Mammary epithelial cell (primary cell): ENCODE measurements at regions of chr12 and their contacts with region 1.

Region 1: GRCh38 chr12:63068857-63069442 is 82.1 kb downstream of the AVPR1A start:
- DNase-seq: peak; percentile 37
- H3K4me3 ChIP-seq: no peak overlapping the region
- H3K27ac ChIP-seq: no peak overlapping the region
- H3K4me1 ChIP-seq: no peaks in the 10 kb centered on the region
- H3K27me3 ChIP-seq: no peaks in the 10 kb centered on the region
- CTCF ChIP-seq: peak; percentile 56 to 62

Region 2: DNA sequence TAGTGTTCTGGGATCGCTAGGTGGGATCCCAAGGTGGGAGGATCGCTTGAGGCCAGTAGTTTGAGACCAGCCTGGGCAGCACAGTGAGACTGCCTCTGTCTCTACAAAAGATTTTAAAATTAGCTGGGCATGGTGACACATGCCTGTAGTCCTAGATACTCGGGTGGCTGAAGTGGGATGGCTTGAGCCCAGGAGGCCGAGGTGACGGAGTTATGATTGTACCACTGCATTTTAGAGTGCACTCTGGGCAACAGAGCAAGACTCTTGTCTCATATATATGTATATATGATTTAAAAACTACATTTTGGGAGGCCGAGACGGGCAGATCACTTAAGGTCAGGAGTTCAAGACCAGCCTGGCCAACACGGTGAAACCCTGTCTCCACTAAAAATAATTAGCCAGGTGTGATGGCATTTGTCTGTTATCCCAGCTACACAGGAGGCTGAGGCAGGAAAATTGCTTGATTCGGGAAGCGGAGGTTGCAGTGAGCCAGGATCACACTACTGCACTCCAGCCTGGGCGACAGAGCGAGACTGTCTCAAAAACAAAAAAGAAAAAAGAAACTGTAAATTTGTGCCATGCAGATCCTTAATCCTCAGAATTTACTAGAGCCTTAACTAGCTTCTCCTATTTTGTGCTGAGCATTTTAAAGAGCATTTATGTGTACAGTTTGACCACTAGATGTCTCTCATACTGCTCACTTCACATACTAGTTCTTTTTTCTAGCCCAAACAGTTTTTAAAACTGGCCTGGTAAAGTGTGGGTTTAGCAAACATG is 487.5 kb before region 1 on chr12:
- CTCF ChIA-PET with region 1: no interaction called
- dilution Hi-C with region 1: no loop called
- in situ Hi-C with region 1: loop called in 1 of 2 experiments (anchors 25 kb)
- intact Hi-C with region 1: loop called (anchors 5 kb)
- DNase-seq: peak; percentile 25
- H3K4me3 ChIP-seq: no peak overlapping the region
- H3K27ac ChIP-seq: no peak overlapping the region
- H3K4me1 ChIP-seq: no peaks in the 10 kb centered on the region
- H3K27me3 ChIP-seq: no peaks in the 10 kb centered on the region
- CTCF ChIP-seq: peak; percentile 46 to 65

Region 3: GRCh38 chr12:62799126-62799736 is 269.7 kb before region 1 on chr12:
- CTCF ChIA-PET with region 1: interaction called, 7 read pairs
- dilution Hi-C with region 1: no loop called
- in situ Hi-C with region 1: no loop called
- intact Hi-C with region 1: loop called (anchors 1 kb)
- DNase-seq: peak; percentile 36
- H3K4me3 ChIP-seq: no peak overlapping the region
- H3K27ac ChIP-seq: no peak overlapping the region
- H3K4me1 ChIP-seq: peaks cover 7% of the 10 kb centered on the region
- H3K27me3 ChIP-seq: no peaks in the 10 kb centered on the region
- CTCF ChIP-seq: peak; percentile 95 to 97

Region 4: DNA sequence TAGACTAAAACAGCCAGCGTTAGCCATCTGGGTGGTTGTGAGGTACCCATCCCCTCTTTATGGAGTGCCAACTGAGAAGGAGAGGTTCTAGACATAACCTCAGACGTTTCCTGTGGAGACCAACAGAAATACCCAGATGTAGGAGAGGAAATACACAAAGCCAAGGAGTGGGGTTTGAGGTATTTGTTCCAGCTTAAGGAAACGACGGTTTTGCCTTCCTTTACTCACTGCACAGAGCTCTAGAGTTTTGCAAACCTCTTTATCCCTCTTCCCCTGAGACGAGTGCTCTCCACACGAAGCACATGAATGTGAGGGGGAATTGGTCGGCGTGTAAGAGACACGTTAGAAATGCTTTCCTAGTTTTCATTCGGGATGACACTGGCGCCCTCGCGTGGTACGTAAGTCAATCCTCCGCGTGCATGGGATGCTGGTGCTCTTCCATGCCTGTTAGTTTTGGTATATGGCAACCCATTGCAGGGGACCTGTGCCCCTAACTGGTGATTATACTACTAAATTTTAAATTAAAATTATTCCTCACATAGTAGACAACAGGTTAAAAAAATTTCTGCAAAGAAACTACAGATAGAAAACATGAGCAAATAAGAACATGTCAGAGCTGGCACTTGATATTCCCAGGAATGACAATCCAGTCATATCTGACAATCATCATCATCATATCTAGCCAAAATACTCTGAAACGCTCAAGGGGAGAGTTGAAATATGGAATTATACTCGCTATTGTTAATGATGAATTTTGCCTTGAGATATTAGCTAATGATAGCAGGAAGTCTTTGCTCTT is 255.7 kb before region 1 on chr12:
- CTCF ChIA-PET with region 1: interaction called, 10 read pairs
- dilution Hi-C with region 1: no loop called
- in situ Hi-C with region 1: loop called (anchors 10 kb)
- intact Hi-C with region 1: loop called (anchors 1 kb)
- DNase-seq: peak; percentile 40
- H3K4me3 ChIP-seq: no peak overlapping the region
- H3K27ac ChIP-seq: no peak overlapping the region
- H3K4me1 ChIP-seq: peaks cover 8% of the 10 kb centered on the region
- H3K27me3 ChIP-seq: no peaks in the 10 kb centered on the region
- CTCF ChIP-seq: peak; percentile 85 to 90

Region 5: DNA sequence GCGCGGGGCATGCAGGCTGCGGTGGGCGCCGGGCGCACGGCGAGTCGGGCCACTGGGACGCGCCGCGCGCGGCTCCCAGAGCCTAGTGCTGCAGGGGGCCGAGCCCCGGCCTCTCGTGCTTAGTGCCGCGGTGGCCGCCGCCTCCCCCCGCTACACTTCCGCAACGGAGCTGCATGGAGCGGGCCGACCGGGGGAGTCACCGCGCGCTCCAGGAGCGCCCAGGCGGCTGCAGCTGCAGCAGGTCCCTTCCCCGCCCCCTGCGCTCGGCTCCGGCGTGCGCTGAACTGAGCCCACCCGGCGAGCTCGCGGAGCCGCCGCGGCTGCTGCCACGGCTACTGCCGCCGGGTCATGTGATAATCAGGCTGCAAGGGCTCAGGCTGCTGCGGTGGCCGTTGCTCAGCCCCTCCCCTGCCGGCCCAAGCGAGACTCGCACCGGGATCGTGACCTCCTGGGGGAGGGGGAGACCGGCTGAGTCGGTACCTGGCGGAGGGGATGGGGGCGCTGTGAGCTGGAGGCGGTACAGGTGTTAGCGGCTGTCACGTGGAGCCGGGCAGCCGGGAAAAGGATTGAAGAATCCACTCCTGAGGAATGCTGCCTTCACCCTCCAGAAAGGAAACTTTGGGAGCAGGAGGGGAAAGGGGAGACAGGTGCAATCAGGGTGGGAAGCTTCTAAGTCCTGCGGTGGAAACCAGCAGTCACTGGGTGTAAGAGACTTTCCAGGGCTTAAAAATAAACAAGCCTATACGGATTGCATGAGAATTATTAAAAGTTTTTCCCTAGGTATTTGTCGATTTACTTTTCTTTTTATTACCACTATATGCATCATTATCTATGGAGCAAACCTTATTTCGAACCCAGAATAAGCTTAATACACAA is 133.9 kb before region 1 on chr12 and contains the start of gene PPM1H:
- CTCF ChIA-PET with region 1: no interaction called
- dilution Hi-C with region 1: no loop called
- in situ Hi-C with region 1: no loop called
- intact Hi-C with region 1: loop called (anchors 10 kb)
- DNase-seq: peak; percentile 11
- H3K4me3 ChIP-seq: peak within 1 kb of the TSS; percentile 55 to 63 (median 60)
- H3K27ac ChIP-seq: no peak within 1 kb of the TSS
- H3K4me1 ChIP-seq: peaks cover 14% of the 10 kb centered on the region
- H3K27me3 ChIP-seq: peaks cover 17% of the 10 kb centered on the region
- CTCF ChIP-seq: peak in 1 of 2 donors; percentile 41
- total RNA-seq, gene PPM1H: 0.28 to 1.3 TPM

Region 6: DNA sequence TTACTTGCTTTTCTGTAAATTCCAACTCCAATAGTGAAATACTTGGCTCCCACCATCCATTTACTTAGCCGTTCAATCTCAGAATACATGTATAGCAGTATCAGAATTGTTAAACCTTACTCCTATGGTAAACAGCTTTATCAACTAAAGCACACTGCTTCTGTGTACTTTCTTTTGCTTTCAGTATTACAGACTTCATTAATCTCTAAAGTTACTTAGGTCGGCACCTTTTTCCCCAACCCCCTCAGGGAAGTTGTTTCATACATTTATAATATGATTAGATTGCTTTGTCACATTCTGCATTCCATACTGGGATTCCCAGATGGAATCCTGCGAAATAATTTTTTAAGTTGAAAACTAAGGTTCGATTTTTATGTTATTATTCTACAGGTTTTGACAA is 69.5 kb after region 1 on chr12:
- CTCF ChIA-PET with region 1: no interaction called
- dilution Hi-C with region 1: no loop called
- in situ Hi-C with region 1: no loop called
- intact Hi-C with region 1: no loop called
- DNase-seq: no peak
- H3K4me3 ChIP-seq: no peak overlapping the region
- H3K27ac ChIP-seq: no peak overlapping the region
- H3K4me1 ChIP-seq: no peaks in the 10 kb centered on the region
- H3K27me3 ChIP-seq: peaks cover 3% of the 10 kb centered on the region
- CTCF ChIP-seq: no peak